ENCODE measurements at regions of chr1 and their contacts with region 1.

Region 1: GRCh38 chr1:117059678-117060440 is at the start of gene TTF2:
- DNase-seq: peak; percentile 99
- H3K4me3 ChIP-seq: peak within 1 kb of the TSS; percentile 30 to 88 (median 69)
- H3K27ac ChIP-seq: peak within 1 kb of the TSS; percentile 31
- H3K4me1 ChIP-seq: peaks cover 9% of the 10 kb centered on the region
- H3K27me3 ChIP-seq: no peaks in the 10 kb centered on the region
- CTCF ChIP-seq: no peak
- POLR2A ChIP-seq: peak; percentile 42
- total RNA-seq, gene TTF2: 44.1 and 44.4 TPM in 2 replicates

Region 2: DNA sequence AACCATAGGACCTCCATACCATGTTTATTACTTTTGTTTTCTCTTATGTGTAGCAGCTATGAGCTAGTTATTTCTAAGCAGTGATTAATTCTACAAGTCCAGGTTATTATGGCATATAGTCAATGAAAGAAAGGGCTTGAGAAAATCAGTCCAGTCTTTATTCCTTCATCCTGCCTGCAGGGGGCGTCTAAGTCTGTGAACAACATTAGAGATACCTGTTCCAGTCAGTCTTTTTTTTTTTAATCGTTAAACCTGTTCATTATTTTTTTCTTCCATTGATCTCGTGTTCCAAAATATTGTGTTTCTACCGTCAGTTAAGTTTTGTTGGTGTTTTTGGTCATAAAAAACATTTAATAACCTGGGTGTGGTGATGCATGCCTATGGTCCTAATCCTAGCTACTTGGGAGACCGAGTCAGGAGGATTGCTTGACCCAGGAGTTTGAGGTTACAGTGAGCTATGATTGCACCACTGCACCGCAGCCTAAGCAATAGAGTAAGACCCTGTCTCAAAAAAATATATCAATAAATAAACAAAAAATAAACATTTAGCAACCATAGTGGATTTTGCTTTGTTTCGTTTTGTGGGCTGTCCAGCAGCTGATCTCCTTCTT is 335.0 kb before region 1 on chr1:
- CTCF ChIA-PET with region 1: interaction called, 6 read pairs
- POLR2A ChIA-PET with region 1: no interaction called
- dilution Hi-C with region 1: no loop called
- intact Hi-C with region 1: loop called (anchors 1 kb)
- DNase-seq: peak; percentile 47
- H3K4me3 ChIP-seq: no peak overlapping the region
- H3K27ac ChIP-seq: no peak overlapping the region
- H3K4me1 ChIP-seq: peaks cover 8% of the 10 kb centered on the region
- H3K27me3 ChIP-seq: peaks cover 3 to 8% of the 10 kb centered on the region in 2 experiments
- CTCF ChIP-seq: peak; percentile 62 to 69
- POLR2A ChIP-seq: no peak

Region 3: GRCh38 chr1:116817582-116818064 is 242.2 kb before region 1 on chr1:
- CTCF ChIA-PET with region 1: no interaction called
- POLR2A ChIA-PET with region 1: no interaction called
- dilution Hi-C with region 1: no loop called
- intact Hi-C with region 1: loop called (anchors 1 kb)
- DNase-seq: peak; percentile 54
- H3K4me3 ChIP-seq: no peak overlapping the region
- H3K27ac ChIP-seq: no peak overlapping the region
- H3K4me1 ChIP-seq: no peaks in the 10 kb centered on the region
- H3K27me3 ChIP-seq: peaks cover 0 to 7% of the 10 kb centered on the region in 2 experiments
- CTCF ChIP-seq: peak; percentile 66 to 73
- POLR2A ChIP-seq: no peak

Region 4: DNA sequence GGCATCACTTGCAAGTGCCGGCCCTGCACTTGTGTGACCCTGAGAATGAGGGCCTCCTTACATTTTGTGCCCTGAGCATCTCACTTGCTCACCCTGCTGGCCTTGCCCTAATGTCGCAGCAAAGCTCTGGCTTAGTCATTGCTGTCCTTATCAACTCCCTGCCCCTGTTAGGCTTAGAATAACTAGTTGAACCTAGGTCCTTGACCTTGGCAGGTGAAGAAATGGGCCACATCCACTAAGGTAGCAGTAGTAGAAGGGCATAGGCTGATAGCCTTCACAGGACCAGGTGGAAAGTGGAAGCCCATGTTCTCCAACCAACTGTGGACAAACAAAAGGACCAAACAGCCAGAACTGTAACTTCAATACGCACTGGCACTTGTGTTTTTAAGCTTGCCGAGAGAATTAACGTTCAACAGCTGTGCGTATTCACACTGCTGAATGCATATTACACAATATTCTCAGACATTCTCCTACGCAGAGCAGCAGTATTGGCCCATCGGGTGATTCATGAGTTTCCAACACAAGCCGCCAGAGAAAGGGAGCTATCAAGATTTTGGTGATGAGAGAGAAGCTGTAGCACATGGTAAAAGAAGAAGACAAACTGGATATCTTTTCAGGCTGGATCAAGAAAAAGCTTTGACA is 177.9 kb before region 1 on chr1:
- CTCF ChIA-PET with region 1: no interaction called
- POLR2A ChIA-PET with region 1: no interaction called
- dilution Hi-C with region 1: no loop called
- intact Hi-C with region 1: loop called (anchors 1 kb)
- DNase-seq: peak; percentile 26
- H3K4me3 ChIP-seq: no peak overlapping the region
- H3K27ac ChIP-seq: no peak overlapping the region
- H3K4me1 ChIP-seq: peaks cover 26% of the 10 kb centered on the region
- H3K27me3 ChIP-seq: no peaks in the 10 kb centered on the region
- CTCF ChIP-seq: peak; percentile 12 to 27
- POLR2A ChIP-seq: no peak

Region 5: GRCh38 chr1:117128323-117129079 is 68.6 kb after region 1 on chr1:
- CTCF ChIA-PET with region 1: interaction called, 490 read pairs
- POLR2A ChIA-PET with region 1: interaction called, 5 read pairs
- dilution Hi-C with region 1: no loop called
- intact Hi-C with region 1: no loop called
- DNase-seq: peak; percentile 68
- H3K4me3 ChIP-seq: no peak overlapping the region
- H3K27ac ChIP-seq: no peak overlapping the region
- H3K4me1 ChIP-seq: no peaks in the 10 kb centered on the region
- H3K27me3 ChIP-seq: peaks cover 11 to 25% of the 10 kb centered on the region in 2 experiments
- CTCF ChIP-seq: peak; percentile 36 to 37
- POLR2A ChIP-seq: no peak

Region 6: DNA sequence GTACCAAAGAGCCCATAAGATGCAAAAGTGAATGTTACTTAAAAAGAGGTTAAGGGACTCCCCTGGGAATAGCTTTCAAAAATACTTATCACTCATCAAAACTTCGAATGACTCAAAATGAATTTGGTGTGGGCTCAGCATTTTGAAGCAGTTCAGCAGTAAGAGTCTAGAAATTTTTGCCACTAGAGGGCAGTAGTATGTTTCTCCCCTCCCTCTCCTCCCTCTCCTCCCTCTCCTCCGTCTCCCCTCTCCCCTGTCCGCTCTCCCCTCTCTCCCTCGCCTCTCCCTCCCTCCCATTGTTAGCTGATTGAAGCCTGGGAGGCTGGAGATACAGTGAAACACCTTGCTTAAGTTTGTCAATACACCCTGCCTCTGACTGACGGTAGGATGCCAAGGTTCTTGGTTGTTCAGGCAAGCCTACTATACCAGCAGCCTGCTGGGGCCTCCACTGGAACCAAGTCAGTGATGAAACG is 475.2 kb after region 1 on chr1:
- CTCF ChIA-PET with region 1: interaction called, 3 read pairs
- POLR2A ChIA-PET with region 1: no interaction called
- dilution Hi-C with region 1: no loop called
- intact Hi-C with region 1: loop called (anchors 10 kb)
- DNase-seq: peak; percentile 47
- H3K4me3 ChIP-seq: no peak overlapping the region
- H3K27ac ChIP-seq: no peak overlapping the region
- H3K4me1 ChIP-seq: no peaks in the 10 kb centered on the region
- H3K27me3 ChIP-seq: peaks cover 0 to 2% of the 10 kb centered on the region in 2 experiments
- CTCF ChIP-seq: peak; percentile 50 to 74
- POLR2A ChIP-seq: no peak